ENCODE measurements at regions of chr17 and their contacts with region 1.

Region 1: GRCh38 chr17:74280093-74280513 is 6.1 kb downstream of the DNAI2 start:
- DNase-seq: peak; percentile 69
- H3K4me3 Mint-ChIP-seq: peak overlapping the region; percentile 9
- H3K27ac Mint-ChIP-seq: peak overlapping the region; percentile 90
- H3K4me1 Mint-ChIP-seq: peaks cover 50% of the 10 kb centered on the region
- H3K27me3 Mint-ChIP-seq: no peaks in the 10 kb centered on the region

Region 2: GRCh38 chr17:74307984-74308773 is 28.1 kb after region 1 on chr17:
- intact Hi-C with region 1: no loop called
- DNase-seq: no peak
- H3K4me3 Mint-ChIP-seq: no peak overlapping the region
- H3K27ac Mint-ChIP-seq: no peak overlapping the region
- H3K4me1 Mint-ChIP-seq: peaks cover 11% of the 10 kb centered on the region
- H3K27me3 Mint-ChIP-seq: peaks cover 9% of the 10 kb centered on the region

Region 3: GRCh38 chr17:74513987-74514631 is 234.0 kb after region 1 on chr17:
- intact Hi-C with region 1: loop called (anchors 5 kb)
- DNase-seq: peak; percentile 63
- H3K4me3 Mint-ChIP-seq: no peak overlapping the region
- H3K27ac Mint-ChIP-seq: peak overlapping the region; percentile 92
- H3K4me1 Mint-ChIP-seq: peaks cover 31% of the 10 kb centered on the region
- H3K27me3 Mint-ChIP-seq: peaks cover 8% of the 10 kb centered on the region

Measured in activated T-helper 2 cell treated with anti-CD3 and anti-CD28 coated beads, Interferon-gamma antibody, Interleukin-2, Interleukin-4, amounts not matched to agents 10 μg/mL and 5 μg/mL and 100 μg/mL, durations not matched to agents 14 hours and 24 hours and 36 hours (primary cell).